Posterior cingulate gyrus (tissue), 11 donors: ENCODE measurements at regions of chr1 and their contacts with region 1.

Region 1: DNA sequence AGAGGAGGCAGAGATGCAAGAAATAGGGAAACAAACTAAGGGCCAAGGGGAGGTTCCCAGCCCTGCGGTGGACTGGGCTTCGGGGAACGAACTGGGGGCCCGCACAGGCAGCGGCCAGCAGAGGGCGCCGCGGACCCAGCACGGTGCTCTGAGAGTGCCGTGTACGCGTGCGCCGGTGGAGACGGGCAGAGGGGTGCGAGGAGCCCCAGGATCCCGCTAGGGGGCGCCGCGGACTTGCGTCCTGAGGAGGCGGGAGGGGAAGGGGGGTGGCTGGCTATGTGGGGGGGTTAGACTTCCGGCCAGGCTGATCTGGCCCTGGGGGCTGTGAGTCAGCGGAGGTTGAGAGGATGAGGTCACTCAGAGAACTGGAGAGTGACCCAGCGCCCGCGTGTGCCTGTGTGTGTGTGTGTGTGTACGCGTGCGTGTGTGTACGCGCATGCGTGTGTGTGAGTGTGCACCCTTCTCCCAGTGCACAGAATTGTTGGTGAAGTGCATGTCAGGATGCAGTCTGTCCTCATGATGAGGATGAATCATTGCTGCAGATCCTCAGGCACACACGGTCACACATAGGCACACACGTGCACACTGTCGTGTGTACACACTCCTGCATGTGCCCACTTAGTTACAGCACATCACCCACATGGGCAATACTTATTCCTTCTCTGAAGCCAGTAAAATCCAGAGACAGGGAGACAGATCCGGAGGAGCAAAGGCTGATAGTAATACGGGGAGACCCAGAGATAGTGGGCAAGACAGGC is 17.0 kb downstream of the NES start:
- DNase-seq: peak; percentile 84 to 99 (median 94)

Region 2: DNA sequence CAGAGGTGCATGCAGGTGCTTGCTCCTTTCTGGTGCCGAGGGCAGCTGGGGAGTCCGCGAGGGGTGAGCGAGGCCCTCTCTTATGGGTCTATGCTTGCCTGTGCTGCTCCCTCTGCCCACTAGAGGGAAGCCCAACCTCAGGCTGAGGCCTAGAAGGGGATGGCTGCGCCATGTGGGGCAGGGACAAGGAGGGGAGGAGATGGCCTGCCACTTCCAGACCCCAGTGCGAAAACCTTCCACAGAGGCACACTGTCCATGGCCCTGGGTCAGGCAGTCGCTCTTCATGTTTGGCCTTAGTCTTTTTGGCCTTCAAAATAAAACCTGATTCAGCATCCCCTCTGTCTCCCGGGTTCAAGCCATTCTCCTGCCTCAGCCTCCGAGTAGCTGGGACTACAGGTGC is 277.1 kb before region 1 on chr1:
- intact Hi-C with region 1: loop called (anchors 5 kb)
- DNase-seq: peak; percentile 69 to 97 (median 83)

Region 3: GRCh38 chr1:156583821-156584622 is 76.2 kb before region 1 on chr1:
- intact Hi-C with region 1: loop called (anchors 2 kb)
- DNase-seq: peak in 6 of 10 donors; percentile 50 to 76 (median 70)

Region 4: GRCh38 chr1:156625436-156626078 is 34.6 kb before region 1 on chr1:
- intact Hi-C with region 1: loop called (anchors 1 kb)
- DNase-seq: peak in 7 of 10 donors; percentile 66 to 93 (median 75)

Region 5: DNA sequence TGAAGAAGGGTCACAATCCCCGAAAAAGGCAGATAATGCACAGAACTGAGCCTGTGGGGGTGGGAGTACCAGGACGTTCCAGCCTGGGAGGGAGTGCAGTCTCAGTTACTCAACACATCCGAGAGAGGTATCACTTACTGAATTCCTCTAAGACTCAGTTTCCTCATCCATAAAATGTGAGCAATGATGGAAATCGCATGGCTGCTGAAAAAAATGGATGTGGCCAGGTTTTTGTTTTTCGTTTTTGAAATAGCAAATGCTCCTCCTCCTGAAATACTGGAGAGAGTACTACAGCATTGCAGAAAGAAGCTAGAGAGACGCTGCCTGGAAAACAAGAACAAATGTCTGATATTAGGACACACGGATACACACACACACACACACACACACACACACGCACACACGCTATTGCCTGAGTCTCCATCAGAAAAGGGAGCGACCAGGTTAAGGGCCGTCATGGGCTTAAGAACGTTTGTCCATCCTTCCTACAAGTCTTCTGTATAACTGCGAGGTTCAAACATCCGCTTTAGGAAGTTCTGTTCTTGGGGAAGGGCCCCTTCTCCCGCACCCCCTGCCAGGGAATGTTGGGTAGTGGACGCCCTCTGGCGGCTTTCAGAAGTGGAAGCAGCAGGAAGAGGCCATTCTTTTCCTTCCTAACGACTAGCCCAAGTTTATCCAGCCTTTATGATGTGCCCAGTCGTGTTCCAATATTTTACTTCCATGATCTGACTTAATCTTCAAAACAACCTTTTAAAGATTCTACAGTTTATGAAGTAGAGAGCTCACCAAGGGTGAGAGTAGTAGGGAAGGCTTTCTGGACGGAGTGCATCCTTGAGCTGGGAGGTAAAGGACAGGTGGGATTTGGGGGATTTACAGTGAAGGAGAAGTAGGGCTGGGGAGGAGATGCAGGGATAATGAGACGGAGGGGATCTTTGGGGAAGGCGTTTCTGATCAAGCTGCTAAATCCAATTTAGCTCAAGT is 17.7 kb after region 1 on chr1:
- intact Hi-C with region 1: loop called (anchors 1 kb)
- DNase-seq: peak in 9 of 10 donors; percentile 45 to 97 (median 74)